ENCODE measurements at regions of chr12 and their contacts with region 1.

Region 1: DNA sequence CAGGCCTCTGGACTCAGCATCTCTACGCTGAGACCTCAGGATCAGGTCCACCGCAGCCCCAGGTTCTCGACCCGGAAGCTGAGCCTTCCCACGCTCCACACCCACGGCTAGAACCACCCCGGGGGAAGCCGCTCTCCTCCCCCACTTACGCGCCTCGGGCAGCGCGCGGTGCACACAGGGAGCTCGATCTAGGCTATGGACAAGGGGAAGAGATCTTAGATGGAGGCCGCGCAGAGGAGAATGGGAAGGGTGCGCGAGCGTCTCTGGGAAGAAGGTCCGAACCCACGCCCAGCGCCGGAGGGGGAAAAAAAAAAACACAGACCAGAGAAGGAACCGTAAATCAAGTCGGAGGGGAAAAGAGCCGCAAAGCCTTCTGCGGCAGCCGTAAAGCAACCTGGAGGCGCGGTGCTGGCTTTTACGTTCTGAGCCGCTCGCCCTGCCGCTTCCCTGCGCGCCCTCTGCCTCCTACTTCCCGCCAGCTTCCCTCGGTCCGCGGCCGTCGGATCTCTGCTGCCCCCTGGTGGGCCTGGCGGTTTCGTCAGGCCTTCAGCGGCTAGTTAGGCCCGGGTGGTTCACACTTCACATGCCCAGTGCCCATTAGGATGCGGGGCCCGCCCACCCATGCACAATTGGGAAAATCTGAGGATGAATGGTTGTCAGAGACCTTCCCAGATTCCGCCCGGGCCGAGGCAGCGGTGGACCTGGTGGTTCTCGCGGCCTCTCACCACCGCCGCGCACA is at the start of gene RAD52:
- DNase-seq: peak; percentile 96
- ATAC-seq: peak; percentile 91
- H3K4me3 ChIP-seq: peak within 1 kb of the TSS; percentile 91
- H3K27ac ChIP-seq: peak within 1 kb of the TSS; percentile 85
- H3K4me1 ChIP-seq: peaks cover 6% of the 10 kb centered on the region
- H3K27me3 ChIP-seq: no peaks in the 10 kb centered on the region
- CTCF ChIP-seq: peak; percentile 91 to 93 (median 93)
- EP300 ChIP-seq: peak in 1 of 2 experiments; percentile 25; a peak in 2 of 4 replicates
- POLR2A ChIP-seq: peak; percentile 89
- RAD21 ChIP-seq: peak; percentile 90
- polyA plus RNA-seq, gene RAD52: 2.0 to 2.9 TPM

Region 2: GRCh38 chr12:569803-570434 is 379.7 kb before region 1 on chr12:
- CTCF ChIA-PET with region 1: interaction called, 6 read pairs
- POLR2A ChIA-PET with region 1: interaction called, 4 read pairs
- RAD21 ChIA-PET with region 1: interaction called, 9 read pairs
- SMC1A ChIA-PET with region 1: interaction called, 4 read pairs
- in situ Hi-C with region 1: loop called (anchors 5 kb)
- intact Hi-C with region 1: loop called (anchors 2 kb)
- DNase-seq: no peak
- ATAC-seq: peak; percentile 97
- H3K4me3 ChIP-seq: peak overlapping the region; percentile 64
- H3K27ac ChIP-seq: no peak overlapping the region
- H3K4me1 ChIP-seq: no peaks in the 10 kb centered on the region
- H3K27me3 ChIP-seq: no peaks in the 10 kb centered on the region
- CTCF ChIP-seq: peak; percentile 91 to 94 (median 92)
- EP300 ChIP-seq: no peak
- POLR2A ChIP-seq: no peak
- RAD21 ChIP-seq: peak; percentile 92

Region 3: GRCh38 chr12:614411-614970 is 335.1 kb before region 1 on chr12:
- CTCF ChIA-PET with region 1: interaction called, 13 read pairs
- POLR2A ChIA-PET with region 1: no interaction called
- RAD21 ChIA-PET with region 1: interaction called, 10 read pairs
- SMC1A ChIA-PET with region 1: interaction called, 4 read pairs
- in situ Hi-C with region 1: no loop called
- intact Hi-C with region 1: no loop called
- DNase-seq: no peak
- ATAC-seq: peak; percentile 78
- H3K4me3 ChIP-seq: no peak overlapping the region
- H3K27ac ChIP-seq: no peak overlapping the region
- H3K4me1 ChIP-seq: peaks cover 10% of the 10 kb centered on the region
- H3K27me3 ChIP-seq: no peaks in the 10 kb centered on the region
- CTCF ChIP-seq: peak; percentile 61 to 86 (median 63)
- EP300 ChIP-seq: no peak
- POLR2A ChIP-seq: no peak
- RAD21 ChIP-seq: peak; percentile 75

Region 4: GRCh38 chr12:810671-811415 is 138.8 kb before region 1 on chr12:
- CTCF ChIA-PET with region 1: interaction called, 10 read pairs
- POLR2A ChIA-PET with region 1: no interaction called
- RAD21 ChIA-PET with region 1: interaction called, 11 read pairs
- SMC1A ChIA-PET with region 1: interaction called, 4 read pairs
- in situ Hi-C with region 1: no loop called
- intact Hi-C with region 1: no loop called
- DNase-seq: no peak
- ATAC-seq: peak; percentile 78
- H3K4me3 ChIP-seq: peak overlapping the region; percentile 5; the same call in 1 of the 2 replicates
- H3K27ac ChIP-seq: peak overlapping the region; percentile 9; the same call in 1 of the 2 replicates
- H3K4me1 ChIP-seq: peaks cover 49% of the 10 kb centered on the region
- H3K27me3 ChIP-seq: no peaks in the 10 kb centered on the region
- CTCF ChIP-seq: no peak
- EP300 ChIP-seq: peak; percentile 61 to 70; a peak in 2 of 4 replicates
- POLR2A ChIP-seq: no peak
- RAD21 ChIP-seq: no peak

Region 5: GRCh38 chr12:1083889-1084262 is 134.3 kb after region 1 on chr12:
- CTCF ChIA-PET with region 1: interaction called, 4 read pairs
- POLR2A ChIA-PET with region 1: no interaction called
- RAD21 ChIA-PET with region 1: interaction called, 3 read pairs
- SMC1A ChIA-PET with region 1: interaction called, 5 read pairs
- in situ Hi-C with region 1: no loop called
- intact Hi-C with region 1: loop called (anchors 5 kb)
- DNase-seq: no peak
- ATAC-seq: peak; percentile 60
- H3K4me3 ChIP-seq: no peak overlapping the region
- H3K27ac ChIP-seq: no peak overlapping the region
- H3K4me1 ChIP-seq: peaks cover 3% of the 10 kb centered on the region; the same call in 1 of the 2 replicates
- H3K27me3 ChIP-seq: no peaks in the 10 kb centered on the region
- CTCF ChIP-seq: no peak
- EP300 ChIP-seq: no peak
- POLR2A ChIP-seq: no peak
- RAD21 ChIP-seq: no peak

Measured in GM12878 (cell line).